ENCODE measurements at regions of chr11 and their contacts with region 1.

Region 1: GRCh38 chr11:12167098-12168000 is 57.0 kb downstream of the MICAL2 start:
- DNase-seq: peak; percentile 71
- H3K4me3 Mint-ChIP-seq: peak overlapping the region; percentile 25
- H3K27ac Mint-ChIP-seq: peak overlapping the region; percentile 95
- H3K4me1 Mint-ChIP-seq: peaks cover 79% of the 10 kb centered on the region
- H3K27me3 Mint-ChIP-seq: no peaks in the 10 kb centered on the region
- CTCF ChIP-seq: no peak

Region 2: DNA sequence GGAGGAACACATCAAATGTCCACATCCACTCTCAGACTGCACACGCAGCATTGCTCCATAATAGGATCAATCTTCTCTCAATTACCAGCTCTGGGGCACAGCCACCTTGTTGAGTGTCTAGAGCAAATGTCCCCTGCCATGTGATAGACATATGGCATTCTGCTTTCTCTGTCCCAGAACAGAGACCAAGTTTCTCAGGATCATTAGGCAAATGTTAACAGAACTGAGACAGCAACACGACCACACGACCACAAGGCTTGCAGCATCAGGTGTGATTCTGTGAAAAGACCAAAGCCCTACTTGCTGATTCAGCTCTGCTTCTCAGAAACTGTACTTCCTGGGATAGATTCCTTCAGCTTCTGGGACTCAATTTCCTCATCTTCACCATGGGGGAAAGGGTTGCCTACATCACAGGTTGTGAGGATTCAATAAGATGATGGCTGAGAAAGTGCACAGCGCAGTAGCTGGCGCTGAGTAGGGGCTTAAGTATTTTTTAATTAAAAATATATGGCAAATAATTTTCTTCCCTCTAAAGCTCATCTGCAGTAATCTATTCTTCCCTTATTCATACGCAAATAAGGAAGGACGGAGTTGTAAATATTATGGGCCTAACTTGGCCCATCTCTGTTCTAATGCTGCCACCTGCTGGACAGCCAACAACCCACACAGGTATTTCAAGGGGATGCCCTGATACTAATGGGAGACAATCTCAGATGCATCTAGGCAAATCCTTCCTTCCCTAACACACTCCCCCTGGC is 379.9 kb before region 1 on chr11:
- CTCF ChIA-PET with region 1: no interaction called
- intact Hi-C with region 1: no loop called
- DNase-seq: peak; percentile 75
- H3K4me3 Mint-ChIP-seq: no peak overlapping the region
- H3K27ac Mint-ChIP-seq: no peak overlapping the region
- H3K4me1 Mint-ChIP-seq: peaks cover 16% of the 10 kb centered on the region
- H3K27me3 Mint-ChIP-seq: peaks cover 18% of the 10 kb centered on the region
- CTCF ChIP-seq: peak; percentile 79

Region 3: GRCh38 chr11:12182676-12183541 is 15.6 kb after region 1 on chr11:
- CTCF ChIA-PET with region 1: interaction called, 12 read pairs
- intact Hi-C with region 1: no loop called
- DNase-seq: peak; percentile 84
- H3K4me3 Mint-ChIP-seq: peak overlapping the region; percentile 44
- H3K27ac Mint-ChIP-seq: peak overlapping the region; percentile 95
- H3K4me1 Mint-ChIP-seq: peaks cover 55% of the 10 kb centered on the region
- H3K27me3 Mint-ChIP-seq: no peaks in the 10 kb centered on the region
- CTCF ChIP-seq: no peak

Measured in Calu3 (cell line).